H1 (cell line): ENCODE measurements at regions of chr5 and their contacts with region 1.

Region 1: DNA sequence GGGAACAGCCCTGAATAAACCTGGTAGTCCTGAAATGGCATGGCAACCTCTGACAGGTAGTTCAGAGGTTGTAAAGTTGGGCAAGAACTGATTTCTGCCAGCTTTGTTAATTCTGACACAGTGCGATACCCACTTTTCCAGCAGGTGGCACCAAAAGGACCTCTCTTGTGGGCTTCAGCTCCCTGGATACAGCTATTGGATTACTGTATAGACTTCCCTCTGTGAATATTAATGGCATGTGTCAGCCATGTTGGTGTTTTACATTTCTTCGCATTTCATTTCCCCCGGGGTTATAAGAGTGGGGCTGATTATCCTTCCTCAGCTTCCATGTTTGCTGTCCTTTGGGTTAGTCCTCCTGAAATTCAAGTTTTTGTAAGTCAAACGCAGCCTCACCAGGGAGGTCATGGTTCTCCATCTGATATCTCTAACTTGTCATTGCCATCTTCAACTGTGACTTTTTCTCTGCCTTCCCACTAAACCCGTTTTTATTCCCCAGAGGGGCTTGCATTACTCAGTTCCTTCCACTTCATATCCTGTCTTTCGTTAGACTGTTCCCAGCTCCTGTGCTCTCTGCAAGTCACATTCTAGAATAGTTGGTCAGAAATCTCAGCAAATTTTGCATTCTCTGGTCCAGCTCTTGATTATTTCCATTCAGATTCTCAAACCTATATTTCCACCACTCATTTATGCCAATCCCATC is 135.6 kb downstream of the LIFR start:
- DNase-seq: peak in 1 of 2 experiments; percentile 72
- H3K4me3 ChIP-seq: no peak overlapping the region
- H3K27ac ChIP-seq: no peak overlapping the region
- H3K4me1 ChIP-seq: peaks cover 0 to 8% (median 3%) of the 10 kb centered on the region in 4 experiments; a peak in 3 of 7 replicates
- H3K27me3 ChIP-seq: no peaks in the 10 kb centered on the region
- CTCF ChIP-seq: peak; percentile 54 to 83 (median 68)
- EP300 ChIP-seq: no peak
- POLR2A ChIP-seq: no peak
- RAD21 ChIP-seq: peak; percentile 68 to 74

Region 2: DNA sequence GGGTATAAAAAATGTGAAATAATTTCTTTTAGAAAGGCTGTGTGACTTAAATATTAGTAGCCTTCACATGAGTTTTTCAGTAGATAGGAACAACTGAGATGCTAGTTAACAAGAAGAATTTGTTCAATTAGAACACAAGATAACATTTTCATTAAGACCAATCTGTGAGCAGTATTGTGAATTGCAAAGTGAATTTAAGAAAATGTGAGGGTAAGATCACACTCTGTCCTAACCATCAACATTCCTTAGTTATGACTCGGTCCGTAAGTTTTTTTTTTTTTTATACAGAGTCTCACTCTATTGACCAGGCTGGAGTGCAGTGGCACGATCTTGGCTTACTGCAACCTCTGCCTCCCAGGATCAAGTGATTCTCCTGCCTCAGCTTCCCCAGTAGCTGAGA is 342.7 kb before region 1 on chr5:
- CTCF ChIA-PET with region 1: no interaction called
- POLR2A ChIA-PET with region 1: no interaction called
- DNase-seq: no peak
- H3K4me3 ChIP-seq: no peak overlapping the region
- H3K27ac ChIP-seq: no peak overlapping the region
- H3K4me1 ChIP-seq: no peaks in the 10 kb centered on the region
- H3K27me3 ChIP-seq: no peaks in the 10 kb centered on the region
- CTCF ChIP-seq: no peak
- EP300 ChIP-seq: no peak
- POLR2A ChIP-seq: no peak
- RAD21 ChIP-seq: no peak

Region 3: DNA sequence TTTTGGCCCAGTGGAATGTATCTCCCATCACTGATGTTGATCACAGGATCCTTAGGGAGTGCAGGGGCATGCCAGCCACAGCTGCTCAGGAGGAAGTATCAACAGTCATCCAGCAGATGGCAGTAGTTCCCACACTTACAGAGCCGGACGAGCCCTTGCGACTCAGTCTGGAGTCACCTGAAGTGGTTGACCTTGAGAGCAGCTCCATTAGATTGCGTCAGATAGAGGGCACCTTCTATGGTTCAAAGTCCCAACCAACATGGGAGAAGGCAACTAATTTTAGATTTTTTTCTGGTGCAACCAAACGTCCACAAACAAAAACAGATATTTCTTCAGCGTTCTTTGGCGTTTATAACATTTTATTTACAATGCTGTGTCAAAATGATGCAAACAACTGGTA is 37.9 kb before region 1 on chr5:
- CTCF ChIA-PET with region 1: interaction called, 27 read pairs
- POLR2A ChIA-PET with region 1: no interaction called
- DNase-seq: peak; percentile 69 to 78
- H3K4me3 ChIP-seq: no peak overlapping the region
- H3K27ac ChIP-seq: no peak overlapping the region
- H3K4me1 ChIP-seq: peaks cover 0 to 12% (median 7%) of the 10 kb centered on the region in 4 experiments; a peak in 3 of 7 replicates
- H3K27me3 ChIP-seq: peaks cover 0 to 3% (median 0%) of the 10 kb centered on the region in 4 experiments; a peak in 1 of 7 replicates
- CTCF ChIP-seq: peak; percentile 84 to 94 (median 89)
- EP300 ChIP-seq: no peak
- POLR2A ChIP-seq: no peak
- RAD21 ChIP-seq: peak; percentile 80 to 93

Region 4: GRCh38 chr5:38404667-38405276 is 16.1 kb before region 1 on chr5:
- CTCF ChIA-PET with region 1: interaction called, 26 read pairs
- POLR2A ChIA-PET with region 1: no interaction called
- DNase-seq: peak in 1 of 2 experiments; percentile 61
- H3K4me3 ChIP-seq: no peak overlapping the region
- H3K27ac ChIP-seq: no peak overlapping the region
- H3K4me1 ChIP-seq: no peaks in the 10 kb centered on the region
- H3K27me3 ChIP-seq: no peaks in the 10 kb centered on the region
- CTCF ChIP-seq: peak; percentile 67 to 80 (median 80)
- EP300 ChIP-seq: no peak
- POLR2A ChIP-seq: no peak
- RAD21 ChIP-seq: peak; percentile 78 to 80

Region 5: DNA sequence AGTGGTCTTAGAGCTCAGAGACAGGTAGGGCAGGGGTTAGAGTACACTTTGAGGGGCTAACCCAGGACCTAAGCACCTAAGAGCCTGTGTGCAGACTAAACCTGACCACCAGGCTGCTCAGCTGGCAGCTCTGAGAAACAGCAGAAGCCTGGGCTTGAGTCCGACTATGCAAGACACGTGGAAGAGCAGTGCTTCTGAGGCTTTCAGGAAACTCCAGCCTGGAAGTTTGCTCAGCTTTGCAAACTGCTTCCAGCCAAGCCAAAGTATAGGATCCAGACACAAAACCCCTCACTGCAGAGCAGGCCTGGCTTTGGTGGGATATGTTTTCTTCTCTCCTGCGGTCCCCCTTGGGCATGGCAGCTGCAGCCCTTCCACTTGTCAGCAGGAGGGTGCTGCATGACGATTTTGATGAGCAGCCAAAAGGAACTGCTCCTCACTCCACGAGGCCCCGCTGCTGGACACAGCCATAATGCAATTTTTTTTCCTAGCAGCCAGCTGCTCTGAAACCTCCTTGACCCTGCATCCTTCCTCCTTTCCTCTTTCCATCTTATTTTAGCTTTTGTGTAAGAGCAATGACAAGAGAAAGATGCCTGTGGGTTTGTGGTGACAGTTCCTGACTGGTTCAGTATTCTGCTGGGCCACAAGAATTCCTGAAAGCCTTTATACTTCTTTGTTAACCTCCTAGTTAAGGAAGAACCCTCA is 12.5 kb after region 1 on chr5:
- CTCF ChIA-PET with region 1: interaction called, 40 read pairs
- POLR2A ChIA-PET with region 1: no interaction called
- DNase-seq: no peak
- H3K4me3 ChIP-seq: no peak overlapping the region
- H3K27ac ChIP-seq: no peak overlapping the region
- H3K4me1 ChIP-seq: no peaks in the 10 kb centered on the region
- H3K27me3 ChIP-seq: no peaks in the 10 kb centered on the region
- CTCF ChIP-seq: no peak
- EP300 ChIP-seq: no peak
- POLR2A ChIP-seq: no peak
- RAD21 ChIP-seq: no peak

Region 6: DNA sequence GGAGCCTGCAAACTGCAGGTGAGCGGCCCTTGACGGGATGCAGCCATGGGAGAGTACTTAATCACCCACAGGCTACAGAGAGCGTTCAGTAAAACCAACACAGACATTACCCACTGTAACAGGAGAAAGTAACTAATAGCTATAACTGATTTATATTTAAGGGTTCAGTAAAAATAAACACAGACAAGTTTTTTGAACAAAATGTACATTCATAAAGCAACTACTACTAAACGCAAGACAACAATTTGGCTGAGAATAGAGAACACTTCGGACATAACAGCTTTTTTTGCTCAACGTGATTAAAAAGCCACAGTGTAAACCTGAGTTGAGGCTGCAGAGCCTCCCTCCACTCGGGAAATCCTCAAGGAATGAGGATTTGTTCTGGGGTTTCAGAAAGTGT is 73.9 kb after region 1 on chr5:
- CTCF ChIA-PET with region 1: no interaction called
- POLR2A ChIA-PET with region 1: no interaction called
- DNase-seq: no peak
- H3K4me3 ChIP-seq: no peak overlapping the region
- H3K27ac ChIP-seq: no peak overlapping the region
- H3K4me1 ChIP-seq: no peaks in the 10 kb centered on the region
- H3K27me3 ChIP-seq: no peaks in the 10 kb centered on the region
- CTCF ChIP-seq: no peak
- EP300 ChIP-seq: no peak
- POLR2A ChIP-seq: no peak
- RAD21 ChIP-seq: no peak

Region 7: DNA sequence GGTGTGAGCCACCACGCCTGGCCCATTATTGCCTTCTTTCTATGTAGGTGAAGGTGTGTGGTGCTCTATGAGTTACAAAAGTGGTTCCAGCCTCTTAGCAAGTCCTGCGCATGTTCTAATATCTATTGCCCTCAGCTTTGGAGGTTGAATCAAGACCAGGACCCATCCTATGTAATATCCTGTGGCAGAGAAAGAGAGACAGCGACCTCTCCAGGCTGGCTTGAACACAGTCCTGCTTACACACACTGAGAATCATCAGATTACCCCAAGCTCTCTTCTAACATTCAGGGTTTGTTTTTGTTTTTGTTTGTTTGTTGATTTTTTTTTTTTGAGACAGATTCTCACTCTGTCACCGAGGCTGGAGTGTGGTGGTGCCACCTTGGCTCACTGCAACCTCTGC is 330.3 kb after region 1 on chr5:
- CTCF ChIA-PET with region 1: interaction called, 28 read pairs
- POLR2A ChIA-PET with region 1: no interaction called
- DNase-seq: no peak
- H3K4me3 ChIP-seq: no peak overlapping the region
- H3K27ac ChIP-seq: no peak overlapping the region
- H3K4me1 ChIP-seq: no peaks in the 10 kb centered on the region
- H3K27me3 ChIP-seq: no peaks in the 10 kb centered on the region
- CTCF ChIP-seq: peak; percentile 5 to 66 (median 53)
- EP300 ChIP-seq: no peak
- POLR2A ChIP-seq: no peak
- RAD21 ChIP-seq: peak; percentile 65 to 75

Region 8: DNA sequence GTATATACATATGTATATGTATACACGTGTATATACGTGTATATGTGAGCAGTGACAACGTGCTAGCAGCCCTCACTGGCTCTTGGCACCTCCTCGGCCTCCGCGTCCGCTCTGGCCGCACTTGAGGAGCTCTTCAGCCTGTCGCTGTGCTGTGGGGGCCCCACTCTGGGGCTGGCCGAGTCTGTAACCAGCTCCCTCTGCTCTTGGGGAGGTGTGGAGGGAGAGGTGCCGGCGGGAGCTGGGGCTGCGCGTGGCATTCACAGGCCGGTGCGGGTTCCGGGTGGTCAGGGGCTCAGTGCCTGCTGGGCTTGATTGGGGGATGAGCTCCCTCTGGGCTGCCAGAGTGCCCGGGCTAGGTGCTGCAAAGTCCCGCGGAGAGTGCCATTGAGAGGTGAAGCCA is 400.8 kb after region 1 on chr5:
- CTCF ChIA-PET with region 1: interaction called, 11 read pairs
- POLR2A ChIA-PET with region 1: no interaction called
- DNase-seq: no peak
- H3K4me3 ChIP-seq: no peak overlapping the region
- H3K27ac ChIP-seq: no peak overlapping the region
- H3K4me1 ChIP-seq: no peaks in the 10 kb centered on the region
- H3K27me3 ChIP-seq: no peaks in the 10 kb centered on the region
- CTCF ChIP-seq: no peak
- EP300 ChIP-seq: no peak
- POLR2A ChIP-seq: no peak
- RAD21 ChIP-seq: no peak